Breast epithelium (tissue), 4 donors: ENCODE measurements at regions of chr1 and their contacts with region 1.

Region 1: GRCh38 chr1:208098773-208099172 is 145.4 kb downstream of the PLXNA2 start:
- DNase-seq: no peak
- H3K4me3 ChIP-seq: no peak overlapping the region
- H3K27ac ChIP-seq: no peak overlapping the region
- H3K4me1 ChIP-seq: no peaks in the 10 kb centered on the region
- H3K27me3 ChIP-seq: no peaks in the 10 kb centered on the region
- CTCF ChIP-seq: no peak
- POLR2A ChIP-seq: no peak

Region 2: DNA sequence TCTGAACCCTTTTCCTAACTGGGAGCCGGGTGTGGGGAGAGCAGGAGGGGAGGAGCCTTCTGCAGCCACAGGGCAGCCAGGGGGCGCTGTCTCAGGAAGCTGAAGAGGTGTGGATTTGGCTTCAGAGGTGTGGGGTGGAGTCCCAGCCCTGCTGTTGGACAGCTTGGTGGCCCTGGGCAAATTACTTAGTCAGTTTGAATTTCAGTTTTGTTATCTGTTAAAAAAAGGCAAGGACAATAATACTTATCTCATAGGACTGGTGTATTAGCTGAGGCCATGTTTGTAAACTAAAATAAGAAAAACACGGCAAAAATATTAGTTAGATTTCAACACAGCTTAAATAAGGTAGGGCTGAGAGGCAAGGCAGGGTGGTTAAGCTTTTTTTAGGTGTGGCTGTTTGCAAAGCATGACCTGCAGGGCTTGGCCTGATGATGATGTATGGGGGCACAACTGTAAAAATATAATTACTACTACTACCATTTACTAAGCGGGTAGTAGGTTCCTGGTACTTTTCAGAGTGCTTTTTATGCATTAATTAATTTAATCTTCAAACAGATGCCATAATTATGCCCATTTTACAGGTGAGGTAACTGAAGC is 33.6 kb after region 1 on chr1:
- intact Hi-C with region 1: no loop called
- DNase-seq: peak; percentile 66 to 78
- H3K4me3 ChIP-seq: peak overlapping the region in 2 of 3 donors; percentile 5 to 13
- H3K27ac ChIP-seq: no peak overlapping the region
- H3K4me1 ChIP-seq: no peaks in the 10 kb centered on the region
- H3K27me3 ChIP-seq: no peaks in the 10 kb centered on the region
- CTCF ChIP-seq: peak; percentile 54 to 73 (median 69)
- POLR2A ChIP-seq: no peak

Region 3: GRCh38 chr1:208251911-208252835 is 153.4 kb after region 1 on chr1:
- intact Hi-C with region 1: loop called (anchors 2 kb)
- DNase-seq: no peak
- H3K4me3 ChIP-seq: no peak overlapping the region
- H3K27ac ChIP-seq: no peak overlapping the region
- H3K4me1 ChIP-seq: no peaks in the 10 kb centered on the region
- H3K27me3 ChIP-seq: no peaks in the 10 kb centered on the region
- CTCF ChIP-seq: peak in 1 of 3 donors; percentile 25
- POLR2A ChIP-seq: no peak

Region 4: GRCh38 chr1:208541225-208541855 is 442.6 kb after region 1 on chr1:
- intact Hi-C with region 1: no loop called
- DNase-seq: no peak
- H3K4me3 ChIP-seq: no peak overlapping the region
- H3K27ac ChIP-seq: no peak overlapping the region
- H3K4me1 ChIP-seq: no peaks in the 10 kb centered on the region
- H3K27me3 ChIP-seq: no peaks in the 10 kb centered on the region
- CTCF ChIP-seq: no peak
- POLR2A ChIP-seq: no peak